Caco-2 (cell line): ENCODE measurements at regions of chr2 and their contacts with region 1.

Region 1: GRCh38 chr2:142951190-142952007 is 73.9 kb downstream of the KYNU start:
- DNase-seq: no peak
- H3K4me3 ChIP-seq: no peak overlapping the region
- H3K4me3 Mint-ChIP-seq: no peak overlapping the region
- H3K27ac Mint-ChIP-seq: no peak overlapping the region
- H3K4me1 ChIP-seq: peaks cover 37% of the 10 kb centered on the region
- H3K4me1 Mint-ChIP-seq: peaks cover 29% of the 10 kb centered on the region
- H3K27me3 ChIP-seq: no peaks in the 10 kb centered on the region
- H3K27me3 Mint-ChIP-seq: no peaks in the 10 kb centered on the region
- CTCF ChIP-seq: no peak

Region 2: DNA sequence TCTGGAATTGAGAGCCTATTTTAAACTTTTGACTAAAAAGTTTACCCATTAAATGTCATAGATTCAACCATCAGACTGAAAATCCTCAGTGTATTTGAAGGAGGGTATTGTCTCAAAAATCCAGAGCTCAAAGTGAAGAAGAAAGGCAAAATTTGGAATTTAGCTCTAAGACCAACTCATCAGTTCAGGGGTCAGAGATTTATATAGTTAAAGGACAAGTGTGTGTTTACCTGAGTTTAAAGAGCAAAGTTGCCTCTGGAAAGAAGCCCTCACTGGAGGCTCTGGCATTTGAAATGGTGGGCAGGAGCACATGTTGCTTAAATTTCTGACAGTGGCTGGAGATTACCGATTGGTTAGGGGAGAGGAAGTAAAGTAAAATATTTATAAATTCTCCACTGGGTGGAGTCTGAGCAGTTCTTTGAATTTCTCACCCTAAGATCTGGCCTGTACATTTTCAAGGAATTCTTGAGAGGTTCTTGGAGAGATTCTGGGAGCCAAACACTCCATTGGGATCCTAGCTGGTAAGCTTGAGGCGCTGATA is 74.1 kb before region 1 on chr2 and contains the start of gene KYNU:
- CTCF ChIA-PET with region 1: no interaction called
- POLR2A ChIA-PET with region 1: no interaction called
- intact Hi-C with region 1: loop called (anchors 5 kb)
- DNase-seq: no peak
- H3K4me3 ChIP-seq: no peak within 1 kb of the TSS
- H3K4me3 Mint-ChIP-seq: peak within 1 kb of the TSS; percentile 9
- H3K27ac Mint-ChIP-seq: no peak within 1 kb of the TSS
- H3K4me1 ChIP-seq: peaks cover 45% of the 10 kb centered on the region
- H3K4me1 Mint-ChIP-seq: peaks cover 39% of the 10 kb centered on the region
- H3K27me3 ChIP-seq: no peaks in the 10 kb centered on the region
- H3K27me3 Mint-ChIP-seq: no peaks in the 10 kb centered on the region
- CTCF ChIP-seq: no peak
- total RNA-seq, gene KYNU: 4.3 and 5.2 TPM in 2 replicates

Region 3: GRCh38 chr2:142974288-142975024 is 23.1 kb after region 1 on chr2:
- CTCF ChIA-PET with region 1: no interaction called
- POLR2A ChIA-PET with region 1: no interaction called
- intact Hi-C with region 1: loop called (anchors 2 kb)
- DNase-seq: peak in 1 of 2 experiments; percentile 42
- H3K4me3 ChIP-seq: no peak overlapping the region
- H3K4me3 Mint-ChIP-seq: peak overlapping the region; percentile 18
- H3K27ac Mint-ChIP-seq: peak overlapping the region; percentile 77
- H3K4me1 ChIP-seq: peaks cover 38% of the 10 kb centered on the region
- H3K4me1 Mint-ChIP-seq: peaks cover 13% of the 10 kb centered on the region
- H3K27me3 ChIP-seq: no peaks in the 10 kb centered on the region
- H3K27me3 Mint-ChIP-seq: no peaks in the 10 kb centered on the region
- CTCF ChIP-seq: no peak